RWPE1 (cell line): ENCODE measurements at regions of chr5 and their contacts with region 1.

Region 1: DNA sequence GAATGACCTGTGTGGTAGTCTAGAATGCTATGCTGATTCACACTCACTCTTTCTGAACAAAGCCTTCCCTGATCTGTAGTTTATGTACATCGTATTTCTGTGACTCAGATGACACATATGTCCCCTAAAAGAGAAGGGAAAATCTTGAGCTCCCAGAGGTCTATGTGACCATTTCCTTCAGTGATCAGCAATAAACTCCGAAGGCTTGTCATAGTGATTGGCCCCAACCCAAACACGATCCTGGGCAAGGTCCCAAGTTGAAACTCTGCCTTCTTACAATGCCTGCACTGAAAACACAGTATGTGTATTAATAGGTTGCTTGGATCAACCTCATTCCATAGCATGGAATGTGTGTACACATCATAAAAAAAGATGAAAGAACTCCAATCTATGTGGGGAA is 685.8 kb downstream of the MAT2B start:
- DNase-seq: no peak
- H3K27ac ChIP-seq: no peak overlapping the region
- CTCF ChIP-seq: no peak

Region 2: GRCh38 chr5:164132358-164132757 is 58.9 kb before region 1 on chr5:
- CTCF ChIA-PET with region 1: no interaction called
- POLR2A ChIA-PET with region 1: no interaction called
- DNase-seq: no peak
- H3K27ac ChIP-seq: no peak overlapping the region
- CTCF ChIP-seq: no peak

Region 3: DNA sequence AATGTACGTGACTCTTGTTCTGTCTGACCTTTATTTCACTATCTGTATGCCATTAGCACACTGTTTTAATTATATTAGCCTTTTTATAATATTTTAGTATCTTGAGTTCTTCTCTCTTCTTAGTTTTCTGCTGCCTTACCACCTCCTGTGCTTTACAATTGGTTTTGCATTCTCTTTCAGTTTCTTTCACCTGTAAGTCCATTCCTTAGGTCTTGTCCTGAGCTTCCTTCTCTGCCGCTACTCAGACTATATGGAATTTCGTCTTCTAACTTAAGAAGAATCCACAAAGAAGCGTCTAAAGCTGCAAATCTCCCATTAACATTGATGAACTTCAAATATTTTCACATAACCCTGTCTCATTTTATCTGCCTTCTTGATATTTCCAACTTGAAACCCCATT is 42.9 kb before region 1 on chr5:
- CTCF ChIA-PET with region 1: no interaction called
- POLR2A ChIA-PET with region 1: no interaction called
- DNase-seq: no peak
- H3K27ac ChIP-seq: no peak overlapping the region
- CTCF ChIP-seq: no peak

Region 4: DNA sequence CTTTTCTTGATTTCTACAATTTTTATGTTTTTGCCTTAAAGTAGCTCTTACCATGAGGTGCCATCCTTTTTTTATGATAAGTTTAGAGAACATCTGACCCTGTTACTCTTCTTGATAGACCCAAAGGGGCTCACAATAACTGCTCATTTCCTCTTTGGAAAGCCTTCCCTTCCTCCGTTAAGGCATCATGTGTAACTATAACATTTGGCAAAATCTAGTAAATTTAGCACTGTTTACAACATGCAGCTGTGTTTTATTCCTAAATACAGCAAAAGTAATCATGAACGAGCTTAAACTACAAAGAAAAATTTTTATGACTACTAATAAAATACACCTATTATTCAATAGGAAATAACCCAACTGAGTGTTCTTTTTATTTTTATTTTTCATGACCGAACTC is 19.3 kb after region 1 on chr5:
- CTCF ChIA-PET with region 1: interaction called, 10 read pairs
- POLR2A ChIA-PET with region 1: no interaction called
- DNase-seq: no peak
- H3K27ac ChIP-seq: no peak overlapping the region
- CTCF ChIP-seq: no peak